CD8-positive, alpha-beta T cell (primary cell): ENCODE measurements at regions of chr15 and their contacts with region 1.

Region 1: GRCh38 chr15:71448688-71449114 is 333.4 kb downstream of the THSD4 start:
- DNase-seq: peak in 2 of 9 experiments; percentile 5 to 13
- ATAC-seq: no peak
- H3K4me3 ChIP-seq: no peak overlapping the region
- H3K4me3 Mint-ChIP-seq: no peak overlapping the region
- H3K27ac ChIP-seq: no peak overlapping the region
- H3K27ac Mint-ChIP-seq: no peak overlapping the region
- H3K4me1 ChIP-seq: no peaks in the 10 kb centered on the region
- H3K4me1 Mint-ChIP-seq: no peaks in the 10 kb centered on the region
- H3K27me3 ChIP-seq: no peaks in the 10 kb centered on the region
- H3K27me3 Mint-ChIP-seq: no peaks in the 10 kb centered on the region
- CTCF ChIP-seq: peak; percentile 21

Region 2: GRCh38 chr15:71730277-71731144 is 281.8 kb after region 1 on chr15:
- CTCF ChIA-PET with region 1: no interaction called
- POLR2A ChIA-PET with region 1: no interaction called
- intact Hi-C with region 1: loop called in 1 of 2 experiments (anchors 5 kb)
- DNase-seq: peak in 3 of 9 experiments; percentile 8 to 46 (median 36)
- ATAC-seq: no peak
- H3K4me3 ChIP-seq: no peak overlapping the region
- H3K4me3 Mint-ChIP-seq: no peak overlapping the region
- H3K27ac ChIP-seq: no peak overlapping the region
- H3K27ac Mint-ChIP-seq: no peak overlapping the region
- H3K4me1 ChIP-seq: no peaks in the 10 kb centered on the region
- H3K4me1 Mint-ChIP-seq: no peaks in the 10 kb centered on the region
- H3K27me3 ChIP-seq: no peaks in the 10 kb centered on the region
- H3K27me3 Mint-ChIP-seq: peaks cover 15% of the 10 kb centered on the region
- CTCF ChIP-seq: peak; percentile 58